Prostate gland (tissue), 2 donors: ENCODE measurements at regions of chr2 and their contacts with region 1.

Region 1: DNA sequence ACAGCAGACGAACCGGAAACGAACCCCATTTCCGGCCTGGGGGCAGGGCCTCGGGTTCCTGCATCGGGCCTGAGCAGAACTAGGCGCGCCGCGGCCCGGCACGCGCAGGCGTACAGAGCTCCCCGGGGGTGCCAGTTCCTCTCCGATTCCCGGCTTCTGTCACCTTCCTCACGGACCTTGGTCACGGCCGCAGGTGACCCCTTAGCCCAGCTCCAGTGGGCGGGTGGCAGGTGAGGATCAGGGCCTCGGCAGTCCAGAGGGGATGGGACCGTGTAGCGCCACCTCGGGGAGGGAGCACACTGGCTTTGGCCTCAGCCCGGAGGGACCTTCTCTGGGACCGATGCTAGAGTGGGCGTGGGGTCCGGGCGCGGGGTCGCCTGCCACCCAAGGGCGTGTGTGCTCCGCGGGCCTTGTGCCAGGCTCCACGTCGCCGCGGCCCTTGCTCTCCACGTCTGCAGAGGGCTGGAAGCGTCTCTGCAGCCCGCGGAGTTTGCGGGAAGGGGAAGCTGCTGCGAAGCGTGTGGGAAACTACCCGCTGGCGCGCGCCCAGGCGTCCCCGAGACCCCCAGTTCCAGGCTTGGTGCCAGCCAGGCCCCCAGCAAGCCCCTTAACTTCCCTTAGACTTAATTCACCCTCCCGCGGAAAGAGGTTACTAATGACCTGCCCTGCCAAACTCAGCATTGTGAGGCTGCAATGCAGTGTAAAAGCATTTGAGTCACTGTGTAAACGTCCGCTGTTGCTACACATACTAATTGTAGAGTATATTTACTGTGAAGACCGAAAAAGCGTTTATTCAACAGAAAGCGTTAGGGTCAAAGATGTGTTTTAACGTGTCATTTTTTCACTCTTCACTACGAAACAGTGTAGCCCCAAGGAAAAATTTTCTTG is at the start of gene TRAPPC12:
- DNase-seq: peak; percentile 77
- H3K4me3 ChIP-seq: peak within 1 kb of the TSS; percentile 61 to 72
- H3K27ac ChIP-seq: peak within 1 kb of the TSS; percentile 82 to 91
- H3K4me1 ChIP-seq: no peaks in the 10 kb centered on the region
- H3K27me3 ChIP-seq: no peaks in the 10 kb centered on the region
- CTCF ChIP-seq: peak in 3 of 4 experiments; percentile 38 to 57 (median 47)
- POLR2A ChIP-seq: peak; percentile 74
- total RNA-seq, gene TRAPPC12: 114 to 128 TPM

Region 2: DNA sequence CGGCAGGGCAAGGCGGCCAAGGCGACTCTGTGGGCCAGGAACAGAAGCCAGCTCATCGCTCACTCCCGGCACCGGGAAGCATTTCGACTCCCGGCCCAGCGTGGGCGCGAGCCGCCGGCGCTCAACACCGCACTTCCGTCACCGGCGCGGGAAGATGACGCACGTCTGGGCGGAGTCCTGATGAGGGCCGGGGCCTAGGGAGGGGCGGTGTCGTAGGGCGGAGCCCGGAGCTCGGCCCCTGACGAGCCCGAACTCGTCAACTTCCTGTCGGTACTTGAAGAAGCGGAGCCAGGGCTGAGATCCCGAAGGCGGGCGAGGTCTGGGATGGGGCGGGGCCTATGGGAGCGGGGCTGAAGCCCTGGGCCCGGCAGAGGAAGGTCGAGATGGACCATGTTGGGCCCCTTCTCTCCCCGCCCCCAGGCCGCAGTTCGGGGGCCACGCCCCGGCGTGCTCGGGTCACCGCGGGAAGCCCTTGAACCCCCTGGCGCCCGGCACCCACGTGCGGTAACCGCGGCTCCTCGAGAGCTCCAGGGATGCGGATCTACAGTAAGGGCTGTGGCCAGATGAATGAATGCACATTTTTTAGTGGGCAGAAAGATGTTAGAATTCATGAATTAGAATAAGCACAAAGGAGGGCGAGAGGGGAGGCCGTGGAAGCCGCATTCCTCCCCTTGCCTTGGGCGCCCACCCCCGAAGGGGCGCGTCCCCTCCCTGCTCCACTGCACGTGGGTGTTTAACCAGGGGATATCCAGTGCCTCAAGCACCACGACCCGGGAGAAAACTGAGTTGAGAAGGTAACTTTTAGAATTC is 178.5 kb after region 1 on chr2 and contains the start of gene RNASEH1:
- intact Hi-C with region 1: loop called (anchors 5 kb)
- DNase-seq: peak; percentile 97
- H3K4me3 ChIP-seq: peak within 1 kb of the TSS; percentile 94 to 99
- H3K27ac ChIP-seq: peak within 1 kb of the TSS; percentile 80 to 90
- H3K4me1 ChIP-seq: no peaks in the 10 kb centered on the region
- H3K27me3 ChIP-seq: no peaks in the 10 kb centered on the region
- CTCF ChIP-seq: no peak
- POLR2A ChIP-seq: peak; percentile 66
- total RNA-seq, gene RNASEH1: 19.1 to 31.5 TPM